CD14-positive monocyte (primary cell): ENCODE measurements at regions of chr14 and their contacts with region 1.

Region 1: DNA sequence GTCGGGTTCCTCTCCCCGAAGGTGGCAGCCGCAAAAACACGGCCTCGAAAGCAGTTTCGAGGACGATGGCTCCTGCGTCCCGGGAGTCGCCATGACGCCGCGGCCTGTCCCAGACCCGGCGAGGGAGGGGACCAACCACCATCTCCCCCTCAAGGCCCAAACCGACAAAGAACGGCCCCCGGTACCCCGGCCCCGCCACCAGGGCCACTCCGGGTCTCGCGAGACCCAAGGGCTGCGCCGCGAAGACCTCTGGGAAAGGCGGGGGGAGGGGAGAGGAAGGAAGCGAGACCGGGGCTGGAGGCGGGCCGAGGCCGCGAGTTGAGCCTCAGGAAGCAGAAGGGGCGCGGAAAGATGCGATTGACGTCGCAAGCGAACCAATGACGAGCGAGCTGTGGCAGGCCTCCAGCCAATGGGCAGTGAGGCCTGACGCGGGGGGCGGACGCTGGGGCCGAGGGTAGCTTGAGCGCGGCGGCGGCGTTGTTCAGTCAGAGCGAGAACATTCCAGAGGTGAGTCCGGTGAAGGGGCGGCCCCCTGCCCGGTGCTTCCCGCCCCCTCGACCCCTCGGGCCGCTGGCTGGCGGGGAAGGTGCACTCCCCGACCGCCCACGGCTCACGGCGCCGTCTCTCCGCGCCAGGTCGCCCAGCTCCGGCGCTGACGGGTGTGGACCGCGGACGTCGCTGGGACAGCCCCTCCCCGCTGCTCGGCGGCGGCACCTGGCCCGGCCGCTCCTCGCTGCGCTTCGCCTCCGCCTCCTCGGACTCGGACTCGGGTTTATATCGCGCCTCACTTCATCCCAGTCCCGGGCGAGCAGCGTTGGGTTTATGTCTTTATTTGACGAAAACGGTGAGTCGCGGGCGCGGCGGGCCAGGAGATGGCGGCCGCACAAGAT is at the start of gene EIF5:
- DNase-seq: peak; percentile 98 to 99 (median 99)
- H3K4me3 ChIP-seq: peak within 1 kb of the TSS; percentile 85 to 94 (median 86)
- H3K4me3 Mint-ChIP-seq: peak within 1 kb of the TSS; percentile 93 to 95
- H3K27ac ChIP-seq: peak within 1 kb of the TSS; percentile 88 to 98
- H3K27ac Mint-ChIP-seq: peak within 1 kb of the TSS; percentile 93 to 97 (median 96)
- H3K4me1 ChIP-seq: peaks cover 36 to 48% of the 10 kb centered on the region in 2 donors
- H3K4me1 Mint-ChIP-seq: peaks cover 40% of the 10 kb centered on the region
- H3K27me3 ChIP-seq: no peaks in the 10 kb centered on the region
- H3K27me3 Mint-ChIP-seq: no peaks in the 10 kb centered on the region
- CTCF ChIP-seq: peak; percentile 47
- polyA plus RNA-seq, gene EIF5: 162 to 191 (median 163) TPM

Region 2: GRCh38 chr14:102080183-102081080 is 1253.6 kb before region 1 on chr14:
- intact Hi-C with region 1: loop called in 1 of 2 experiments (anchors 5 kb)
- DNase-seq: no peak
- H3K4me3 ChIP-seq: no peak overlapping the region
- H3K4me3 Mint-ChIP-seq: no peak overlapping the region
- H3K27ac ChIP-seq: no peak overlapping the region
- H3K27ac Mint-ChIP-seq: peak overlapping the region in 5 of 7 donors; percentile 32 to 55 (median 42)
- H3K4me1 ChIP-seq: peaks cover 6 to 19% of the 10 kb centered on the region in 2 donors
- H3K4me1 Mint-ChIP-seq: peaks cover 28% of the 10 kb centered on the region
- H3K27me3 ChIP-seq: no peaks in the 10 kb centered on the region
- H3K27me3 Mint-ChIP-seq: no peaks in the 10 kb centered on the region
- CTCF ChIP-seq: no peak

Region 3: DNA sequence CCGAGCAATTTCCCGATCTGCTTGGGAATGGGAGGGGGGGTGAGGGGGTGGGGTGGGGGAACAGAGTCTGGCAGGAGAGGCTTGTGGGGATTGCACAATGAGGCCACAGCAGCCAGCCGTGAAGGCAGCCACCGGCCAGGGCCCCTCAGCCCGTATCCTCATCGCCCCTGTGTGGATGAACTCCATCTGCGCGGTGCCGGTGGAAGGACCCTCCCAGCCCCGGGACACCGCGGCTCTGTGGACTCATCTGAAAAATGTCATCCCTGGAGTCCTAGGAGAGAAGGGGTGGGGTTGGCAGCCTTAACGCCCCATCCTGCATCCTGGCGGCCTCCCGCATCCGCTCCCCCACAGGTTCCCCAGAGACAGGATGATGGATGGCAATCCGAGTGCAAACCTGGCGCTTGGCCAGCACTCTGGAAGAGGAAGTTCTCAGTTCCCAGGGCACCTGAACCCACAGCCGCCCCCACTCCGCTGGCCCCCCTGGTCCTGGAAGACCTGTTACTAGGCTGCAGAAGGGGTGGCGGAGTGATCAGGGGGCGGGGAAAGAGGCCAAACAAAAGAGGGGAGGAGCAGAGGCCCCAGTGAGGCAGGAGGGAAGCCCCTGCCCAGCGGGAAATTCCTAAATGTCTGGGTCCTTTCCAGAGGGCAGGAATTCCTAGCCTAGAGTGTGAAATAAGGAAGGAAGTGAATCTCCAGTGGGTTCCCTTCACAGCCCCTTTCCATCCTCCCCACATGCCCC is 212.0 kb before region 1 on chr14:
- intact Hi-C with region 1: loop called in 1 of 2 experiments (anchors 5 kb)
- DNase-seq: peak; percentile 68 to 94 (median 79)
- H3K4me3 ChIP-seq: peak overlapping the region; percentile 70 to 95 (median 95)
- H3K4me3 Mint-ChIP-seq: peak overlapping the region; percentile 87 to 94
- H3K27ac ChIP-seq: peak overlapping the region; percentile 99
- H3K27ac Mint-ChIP-seq: peak overlapping the region; percentile 96 to 99 (median 98)
- H3K4me1 ChIP-seq: peaks cover 75 to 92% of the 10 kb centered on the region in 2 donors
- H3K4me1 Mint-ChIP-seq: peaks cover 64% of the 10 kb centered on the region
- H3K27me3 ChIP-seq: no peaks in the 10 kb centered on the region
- H3K27me3 Mint-ChIP-seq: peaks cover 0 to 2% (median 0%) of the 10 kb centered on the region in 3 donors
- CTCF ChIP-seq: no peak

Region 4: GRCh38 chr14:103213331-103213730 is 120.7 kb before region 1 on chr14:
- intact Hi-C with region 1: no loop called
- DNase-seq: no peak
- H3K4me3 ChIP-seq: no peak overlapping the region
- H3K4me3 Mint-ChIP-seq: no peak overlapping the region
- H3K27ac ChIP-seq: no peak overlapping the region
- H3K27ac Mint-ChIP-seq: no peak overlapping the region
- H3K4me1 ChIP-seq: no peaks in the 10 kb centered on the region
- H3K4me1 Mint-ChIP-seq: no peaks in the 10 kb centered on the region
- H3K27me3 ChIP-seq: peaks cover 19 to 37% of the 10 kb centered on the region in 2 donors
- H3K27me3 Mint-ChIP-seq: peaks cover 35 to 65% (median 45%) of the 10 kb centered on the region in 3 donors
- CTCF ChIP-seq: no peak

Region 5: GRCh38 chr14:103385152-103385993 is 51.4 kb after region 1 on chr14 and contains the start of gene MARK3:
- intact Hi-C with region 1: loop called in 1 of 2 experiments (anchors 2 kb)
- DNase-seq: peak; percentile 96 to 97 (median 96)
- H3K4me3 ChIP-seq: peak within 1 kb of the TSS; percentile 85 to 99 (median 86)
- H3K4me3 Mint-ChIP-seq: peak within 1 kb of the TSS; percentile 96 to 98
- H3K27ac ChIP-seq: peak within 1 kb of the TSS; percentile 86 to 92
- H3K27ac Mint-ChIP-seq: peak within 1 kb of the TSS; percentile 93 to 98 (median 96)
- H3K4me1 ChIP-seq: peaks cover 54 to 75% of the 10 kb centered on the region in 2 donors
- H3K4me1 Mint-ChIP-seq: peaks cover 62% of the 10 kb centered on the region
- H3K27me3 ChIP-seq: no peaks in the 10 kb centered on the region
- H3K27me3 Mint-ChIP-seq: no peaks in the 10 kb centered on the region
- CTCF ChIP-seq: peak; percentile 27
- polyA plus RNA-seq, gene MARK3: 29.3 to 163 (median 44.7) TPM

Region 6: GRCh38 chr14:103528587-103529382 is 194.8 kb after region 1 on chr14 and contains the start of gene TRMT61A:
- intact Hi-C with region 1: loop called in 1 of 2 experiments (anchors 10 kb)
- DNase-seq: peak; percentile 71 to 80 (median 77)
- H3K4me3 ChIP-seq: peak within 1 kb of the TSS; percentile 90 to 98 (median 92)
- H3K4me3 Mint-ChIP-seq: peak within 1 kb of the TSS; percentile 95 to 97
- H3K27ac ChIP-seq: peak within 1 kb of the TSS; percentile 79 to 87
- H3K27ac Mint-ChIP-seq: peak within 1 kb of the TSS; percentile 92 to 99 (median 96)
- H3K4me1 ChIP-seq: peaks cover 42 to 45% of the 10 kb centered on the region in 2 donors
- H3K4me1 Mint-ChIP-seq: peaks cover 47% of the 10 kb centered on the region
- H3K27me3 ChIP-seq: peaks cover 5 to 12% of the 10 kb centered on the region in 2 donors
- H3K27me3 Mint-ChIP-seq: peaks cover 14 to 16% (median 15%) of the 10 kb centered on the region in 3 donors
- CTCF ChIP-seq: no peak
- polyA plus RNA-seq, gene TRMT61A: 2.7 to 7.1 (median 3.4) TPM